ENCODE measurements at regions of chr19 and their contacts with region 1.

Region 1: GRCh38 chr19:18571564-18572300 is at the start of gene UBA52:
- DNase-seq: peak; percentile 95
- H3K4me3 Mint-ChIP-seq: peak within 1 kb of the TSS; percentile 79
- H3K27ac Mint-ChIP-seq: peak within 1 kb of the TSS; percentile 82
- H3K4me1 Mint-ChIP-seq: peaks cover 10% of the 10 kb centered on the region
- H3K27me3 Mint-ChIP-seq: no peaks in the 10 kb centered on the region
- CTCF ChIP-seq: no peak
- total RNA-seq, gene UBA52: 620 and 627 TPM in 2 replicates

Region 2: GRCh38 chr19:18469069-18469846 is 102.5 kb before region 1 on chr19:
- CTCF ChIA-PET with region 1: no interaction called
- intact Hi-C with region 1: loop called (anchors 10 kb)
- DNase-seq: peak; percentile 65
- H3K4me3 Mint-ChIP-seq: no peak overlapping the region
- H3K27ac Mint-ChIP-seq: no peak overlapping the region
- H3K4me1 Mint-ChIP-seq: peaks cover 17% of the 10 kb centered on the region
- H3K27me3 Mint-ChIP-seq: no peaks in the 10 kb centered on the region
- CTCF ChIP-seq: peak; percentile 54

Measured in Calu3 (cell line).